Astrocyte of the cerebellum (primary cell): ENCODE measurements at regions of chr9 and their contacts with region 1.

Region 1: GRCh38 chr9:130526854-130527650 is 52.3 kb upstream of the FUBP3 start:
- DNase-seq: no peak
- H3K4me3 ChIP-seq: no peak overlapping the region
- CTCF ChIP-seq: no peak

Region 2: DNA sequence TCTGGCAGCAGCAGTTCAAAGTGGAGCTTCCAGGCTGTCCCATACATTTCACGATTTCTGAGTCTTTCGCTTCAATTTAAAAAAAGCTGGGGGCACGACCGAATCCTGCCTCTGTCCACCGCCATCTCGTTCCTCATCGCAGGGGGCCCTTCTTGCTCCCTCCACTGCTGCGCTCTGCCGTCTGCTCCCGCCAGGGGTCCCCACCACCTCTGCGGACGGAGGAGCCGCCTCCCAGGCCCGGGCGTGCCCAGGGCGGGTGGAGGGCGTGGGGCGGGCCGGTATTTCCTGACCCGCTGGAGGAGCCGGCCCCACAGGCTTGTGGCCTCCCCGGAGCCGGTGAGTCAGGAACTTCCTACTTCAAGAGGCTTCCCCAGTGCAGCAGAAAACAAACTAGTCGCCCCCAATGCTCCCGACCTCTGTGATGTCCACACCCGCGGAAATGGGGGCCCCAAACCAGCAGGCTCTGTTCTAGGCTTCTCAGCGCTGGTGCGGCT is 641.3 kb before region 1 on chr9:
- in situ Hi-C with region 1: no loop called
- DNase-seq: peak; percentile 75
- H3K4me3 ChIP-seq: no peak overlapping the region
- CTCF ChIP-seq: peak; percentile 84

Region 3: DNA sequence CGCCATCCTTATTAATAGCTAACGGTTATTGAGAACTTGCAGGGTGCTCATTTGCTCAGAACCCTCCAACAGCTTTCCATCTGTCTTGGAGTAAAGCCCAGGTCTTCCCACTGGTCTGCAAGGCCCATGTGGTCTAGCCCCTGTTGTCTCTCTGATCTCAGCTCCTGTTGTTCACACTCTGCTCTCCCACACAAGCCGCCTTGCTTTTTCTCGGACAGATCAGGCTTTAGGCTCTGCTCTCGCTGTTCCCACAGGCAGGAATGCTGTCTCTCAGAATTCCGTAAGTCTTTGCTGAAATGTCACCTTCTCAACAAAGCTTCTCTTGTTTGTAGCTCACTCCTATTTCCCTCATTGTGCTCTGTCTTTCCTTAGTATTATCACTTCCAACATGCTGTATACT is 439.0 kb before region 1 on chr9:
- in situ Hi-C with region 1: no loop called
- DNase-seq: no peak
- H3K4me3 ChIP-seq: no peak overlapping the region
- CTCF ChIP-seq: no peak

Region 4: DNA sequence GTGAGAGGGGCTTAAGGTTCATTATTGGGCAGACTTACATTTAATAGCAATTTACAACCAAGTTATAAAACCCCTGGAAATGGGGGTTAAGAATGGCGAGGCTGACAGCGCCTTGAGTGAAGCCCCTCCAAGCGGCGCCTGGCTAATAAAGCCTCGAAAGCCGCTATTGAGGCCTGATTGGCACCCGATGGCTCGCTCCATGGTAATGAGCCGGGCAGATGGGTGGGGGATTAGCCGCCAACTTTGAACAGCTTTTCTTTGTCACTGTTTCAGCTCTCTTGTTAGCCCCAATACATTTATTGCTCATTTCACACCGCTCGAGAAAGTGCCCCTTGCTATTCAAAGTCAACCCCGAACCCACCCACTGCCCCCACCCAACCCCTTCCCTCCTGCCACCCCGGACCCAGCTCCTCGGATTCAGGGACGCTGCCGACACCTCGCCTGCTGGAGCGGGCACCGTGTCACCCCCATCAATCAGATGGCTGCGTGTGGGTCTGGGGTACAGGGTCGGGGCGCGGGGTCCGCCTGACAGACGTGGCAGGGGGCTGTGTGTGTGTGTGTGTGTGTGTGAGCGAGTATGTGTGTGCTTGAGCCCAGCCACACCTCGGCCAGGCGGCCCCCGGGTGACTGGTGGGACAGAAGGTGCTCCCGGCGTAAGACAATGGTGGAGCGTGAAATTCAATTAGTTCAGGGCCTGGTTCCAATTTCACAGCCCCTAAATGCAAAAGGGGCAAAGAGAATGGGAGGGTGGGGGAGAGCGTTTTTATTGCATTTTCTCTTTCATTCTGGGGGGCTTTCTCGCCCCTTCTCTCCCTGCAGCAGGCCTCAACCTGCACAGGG is 48.1 kb before region 1 on chr9:
- in situ Hi-C with region 1: loop called (anchors 5 kb)
- DNase-seq: no peak
- H3K4me3 ChIP-seq: no peak overlapping the region
- CTCF ChIP-seq: no peak

Region 5: DNA sequence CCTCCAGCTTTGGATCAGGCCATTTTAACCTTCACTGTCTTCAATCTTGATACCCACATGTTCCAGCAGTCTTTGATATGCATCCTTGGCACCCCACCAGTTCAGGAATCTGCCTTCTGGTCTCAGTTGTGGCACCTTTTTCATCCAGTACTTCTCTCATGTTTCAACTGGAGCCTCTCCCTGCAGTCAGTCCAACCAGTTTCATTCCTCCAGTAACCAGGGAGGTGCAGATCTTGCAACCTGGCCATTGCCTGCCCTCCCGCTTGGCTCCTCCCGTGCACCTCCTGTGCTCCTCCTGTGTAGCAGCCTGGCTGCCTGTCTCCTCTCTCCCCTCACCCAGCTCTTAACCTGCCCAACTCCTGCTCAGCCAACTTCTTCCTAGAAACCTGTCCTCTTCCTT is 72.6 kb after region 1 on chr9:
- in situ Hi-C with region 1: loop called (anchors 5 kb)
- DNase-seq: no peak
- H3K4me3 ChIP-seq: no peak overlapping the region
- CTCF ChIP-seq: no peak